ENCODE measurements at regions of chr3 and their contacts with region 1.

Region 1: GRCh38 chr3:183502237-183503181 is 53.0 kb downstream of the KLHL6 start:
- DNase-seq: peak in 6 of 10 donors; percentile 13 to 83 (median 56)
- H3K4me3 ChIP-seq: no peak overlapping the region
- H3K27ac ChIP-seq: peak overlapping the region in 1 of 59 donors; percentile 30
- H3K27me3 ChIP-seq: no peaks in the 10 kb centered on the region
- CTCF ChIP-seq: peak in 52 of 56 donors; percentile 28 to 83 (median 58)

Region 2: DNA sequence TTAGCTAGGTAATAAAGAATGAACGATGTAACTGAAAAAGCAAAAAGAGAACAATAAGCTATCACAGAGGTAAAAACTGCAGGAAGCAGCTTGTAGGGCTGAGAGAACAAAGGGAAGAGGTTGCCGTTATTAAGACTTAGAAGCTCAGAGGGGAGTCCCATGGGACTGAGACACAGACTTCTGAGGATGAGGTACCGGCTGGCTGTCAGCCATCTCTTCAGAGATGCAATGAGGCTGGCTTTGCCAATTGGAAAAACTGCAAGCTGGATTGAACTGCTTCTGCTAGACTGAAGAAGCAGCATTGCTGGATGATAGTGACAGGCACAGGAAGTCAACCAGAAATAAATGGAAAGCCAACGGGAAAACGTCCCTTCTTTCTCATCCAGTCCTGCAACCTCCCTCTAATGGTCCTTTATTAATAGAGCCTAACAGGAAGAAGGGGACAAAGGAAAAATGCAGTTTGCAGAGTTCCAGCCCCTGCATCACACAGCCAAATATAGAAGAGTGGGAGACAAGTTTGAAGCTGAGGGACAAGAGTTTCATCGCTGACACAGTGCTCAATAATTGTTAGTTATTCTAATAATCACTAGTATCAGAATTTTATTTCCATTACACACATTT is 74.1 kb after region 1 on chr3:
- intact Hi-C with region 1: loop called in 1 of 2 experiments (anchors 5 kb)
- DNase-seq: no peak
- H3K4me3 ChIP-seq: no peak overlapping the region
- H3K27ac ChIP-seq: peak overlapping the region in 7 of 59 donors; percentile 2 to 46 (median 11)
- H3K27me3 ChIP-seq: no peaks in the 10 kb centered on the region
- CTCF ChIP-seq: no peak

Region 3: DNA sequence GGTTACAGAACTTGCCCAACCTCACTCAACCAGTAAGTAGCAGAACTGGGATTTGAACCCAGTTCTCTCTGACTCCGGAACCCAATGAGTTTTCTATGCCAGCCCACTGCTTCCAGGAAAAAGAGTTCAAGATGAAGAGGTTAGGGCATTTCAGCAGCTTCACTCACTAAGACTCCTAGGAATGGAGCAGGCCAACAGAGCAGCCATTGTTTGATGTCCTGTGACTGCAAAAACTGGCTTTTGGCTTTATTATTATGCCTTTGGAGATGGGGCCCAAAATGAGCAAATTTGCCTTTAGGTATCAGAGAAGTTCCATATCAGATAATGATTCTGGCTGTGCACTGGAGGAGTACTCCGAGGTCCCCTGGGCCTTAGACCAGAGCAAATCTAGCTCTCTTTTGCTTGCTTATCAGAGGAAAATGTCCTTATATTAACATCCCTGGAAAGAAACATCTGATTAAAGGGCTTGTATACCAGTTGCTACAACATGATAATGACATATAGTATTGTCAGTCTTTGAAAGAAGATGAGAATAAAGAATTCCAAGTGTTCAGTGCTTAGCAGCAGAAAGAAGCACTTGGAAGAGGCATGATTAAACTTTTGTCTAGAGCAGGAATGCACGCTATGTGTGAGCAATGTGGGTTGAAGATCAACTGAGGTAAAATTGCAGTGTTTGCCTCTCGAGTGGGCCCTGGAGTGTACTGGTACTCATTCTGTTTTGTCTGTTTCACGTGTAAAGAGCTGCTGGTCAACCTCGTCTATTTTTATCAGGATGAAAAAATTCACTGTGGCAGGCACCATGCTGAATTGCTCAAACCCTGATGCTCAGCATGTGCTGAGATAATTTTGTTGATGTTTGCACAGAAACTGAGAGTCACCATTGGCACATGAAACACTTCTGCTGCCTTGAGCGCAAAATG is 111.1 kb after region 1 on chr3:
- intact Hi-C with region 1: no loop called
- DNase-seq: no peak
- H3K4me3 ChIP-seq: peak overlapping the region in 1 of 59 donors; percentile 9
- H3K27ac ChIP-seq: peak overlapping the region in 21 of 59 donors; percentile 2 to 67 (median 37)
- H3K27me3 ChIP-seq: no peaks in the 10 kb centered on the region
- CTCF ChIP-seq: no peak

Region 4: GRCh38 chr3:183635431-183636220 is 133.1 kb after region 1 on chr3 and contains the start of gene KLHL24:
- intact Hi-C with region 1: loop called (anchors 10 kb)
- DNase-seq: peak; percentile 93 to 98 (median 96)
- H3K4me3 ChIP-seq: peak within 1 kb of the TSS; percentile 76 to 100 (median 99)
- H3K27ac ChIP-seq: peak within 1 kb of the TSS; percentile 94 to 100 (median 100)
- H3K27me3 ChIP-seq: no peaks in the 10 kb centered on the region
- CTCF ChIP-seq: peak in 32 of 56 donors; percentile 6 to 52 (median 28)
- total RNA-seq, gene KLHL24: 171 to 344 (median 241) TPM

Region 5: GRCh38 chr3:183697610-183698317 is 195.3 kb after region 1 on chr3 and contains the start of gene YEATS2:
- intact Hi-C with region 1: loop called in 1 of 2 experiments (anchors 10 kb)
- DNase-seq: peak in 9 of 10 donors; percentile 31 to 81 (median 49)
- H3K4me3 ChIP-seq: peak within 1 kb of the TSS; percentile 47 to 99 (median 93)
- H3K27ac ChIP-seq: peak within 1 kb of the TSS; percentile 74 to 98 (median 94)
- H3K27me3 ChIP-seq: no peaks in the 10 kb centered on the region
- CTCF ChIP-seq: peak in 1 of 56 donors; percentile 8
- total RNA-seq, gene YEATS2: 39.9 to 82.1 (median 59.9) TPM

Region 6: DNA sequence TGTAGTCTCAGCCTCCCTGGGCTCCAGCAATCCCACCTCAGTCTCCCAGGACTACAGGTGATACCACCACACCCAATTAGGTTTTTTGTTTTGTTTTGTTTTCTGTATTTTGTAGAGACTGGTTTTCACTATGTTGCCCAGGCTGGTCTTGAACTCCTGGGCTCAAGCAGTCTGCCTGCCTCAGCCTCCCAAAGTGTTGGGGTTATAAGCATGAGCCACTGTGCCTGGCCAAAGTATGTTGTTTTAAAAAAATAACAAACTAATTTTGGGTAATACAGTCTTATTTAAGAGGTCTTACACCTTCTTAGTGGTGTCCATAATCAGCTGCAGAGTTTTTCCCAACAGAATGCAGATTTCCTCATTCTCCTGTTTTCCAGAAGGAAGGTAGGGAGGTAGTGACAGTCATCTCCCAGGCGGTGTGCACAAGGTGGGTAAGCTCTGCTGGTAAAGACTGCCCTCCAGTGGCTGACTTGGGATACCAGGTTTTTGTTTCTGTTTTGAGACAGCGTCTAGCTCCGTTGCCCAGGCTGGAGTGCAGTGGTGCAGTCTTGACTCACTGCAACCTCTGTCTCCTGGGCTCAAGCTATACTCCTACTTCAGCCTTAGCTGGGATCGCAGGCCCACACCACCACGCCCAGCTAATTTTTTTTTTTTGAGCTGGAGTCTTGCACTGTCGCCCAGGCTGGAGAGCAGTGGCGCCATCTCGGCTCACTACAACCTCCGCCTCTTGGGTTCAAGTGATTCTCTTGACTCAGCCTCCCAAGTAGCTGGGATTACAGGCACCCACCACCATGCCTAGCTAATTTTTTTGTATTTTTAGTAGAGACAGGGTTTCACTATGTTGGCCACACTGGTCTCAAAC is 264.5 kb after region 1 on chr3:
- intact Hi-C with region 1: loop called (anchors 2 kb)
- DNase-seq: peak in 9 of 10 donors; percentile 66 to 86 (median 74)
- H3K4me3 ChIP-seq: peak overlapping the region in 1 of 59 donors; percentile 10
- H3K27ac ChIP-seq: peak overlapping the region in 46 of 59 donors; percentile 0 to 80 (median 58)
- H3K27me3 ChIP-seq: no peaks in the 10 kb centered on the region
- CTCF ChIP-seq: peak; percentile 66 to 93 (median 84)

Region 7: GRCh38 chr3:183825456-183826161 is 323.1 kb after region 1 on chr3 and contains the start of gene MAP6D1:
- intact Hi-C with region 1: loop called in 1 of 2 experiments (anchors 5 kb)
- DNase-seq: peak; percentile 54 to 86 (median 74)
- H3K4me3 ChIP-seq: peak within 1 kb of the TSS; percentile 67 to 96 (median 86)
- H3K27ac ChIP-seq: peak within 1 kb of the TSS; percentile 80 to 100 (median 97)
- H3K27me3 ChIP-seq: no peaks in the 10 kb centered on the region
- CTCF ChIP-seq: peak in 53 of 56 donors; percentile 12 to 74 (median 51)
- total RNA-seq, gene MAP6D1: 22.2 to 201 (median 55.1) TPM

Region 8: GRCh38 chr3:183884427-183885296 is 382.2 kb after region 1 on chr3 and contains the start of gene PARL:
- intact Hi-C with region 1: loop called in 1 of 2 experiments (anchors 5 kb)
- DNase-seq: peak; percentile 94 to 97 (median 96)
- H3K4me3 ChIP-seq: peak within 1 kb of the TSS; percentile 57 to 100 (median 94)
- H3K27ac ChIP-seq: peak within 1 kb of the TSS in 58 of 59 donors; percentile 4 to 91 (median 80)
- H3K27me3 ChIP-seq: no peaks in the 10 kb centered on the region
- CTCF ChIP-seq: peak; percentile 93 to 100 (median 98)
- total RNA-seq, gene PARL: 21.2 to 63.1 (median 43.9) TPM

Measured in dorsolateral prefrontal cortex (tissue), 120 donors.